ENCODE measurements at regions of chr12 and their contacts with region 1.

Region 1: DNA sequence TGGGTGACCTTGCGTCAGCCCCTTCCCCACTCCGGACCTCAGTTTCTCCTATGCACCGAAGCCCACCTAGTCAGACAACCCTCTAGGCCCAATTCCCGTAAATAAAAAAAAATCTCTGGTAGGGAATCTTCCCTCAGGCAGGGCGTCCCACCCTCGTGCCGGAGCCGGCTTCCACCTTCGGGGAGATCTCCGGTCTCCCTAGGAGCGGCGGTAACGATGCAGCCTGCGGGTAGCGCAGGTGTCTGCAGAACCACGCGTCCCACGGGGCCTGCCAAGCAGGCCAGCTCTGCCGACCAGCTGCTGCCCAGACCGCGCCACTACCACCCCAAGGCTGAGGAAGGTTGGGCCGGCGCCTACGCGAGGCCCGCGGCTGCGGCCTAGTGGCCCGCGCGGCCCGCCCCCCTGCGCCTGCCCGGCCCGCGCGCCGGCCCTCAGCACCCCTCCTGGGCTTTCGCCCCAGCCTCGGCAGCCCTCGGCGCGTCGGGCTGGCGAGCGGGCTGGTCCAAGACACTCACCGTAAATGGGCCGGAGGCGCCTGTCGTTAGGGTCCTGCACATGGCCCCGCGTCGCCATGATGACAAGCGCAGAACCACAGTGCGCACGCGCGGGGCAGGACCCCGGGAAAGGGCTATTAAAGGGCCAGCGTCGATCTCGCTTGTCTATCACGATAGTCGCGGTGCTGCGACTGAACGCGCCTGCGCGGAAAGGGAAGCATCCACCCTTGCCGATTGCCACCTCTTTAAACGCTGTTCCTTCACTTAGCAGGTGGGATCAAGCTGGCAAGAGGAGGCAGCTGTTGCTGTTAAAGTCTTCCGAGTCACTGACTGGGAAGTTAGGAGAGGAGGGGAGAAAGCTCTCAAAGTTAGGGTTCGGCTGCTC is at the start of gene NAA25:
- DNase-seq: peak; percentile 89
- H3K4me3 ChIP-seq: peak within 1 kb of the TSS; percentile 90
- H3K27ac ChIP-seq: peak within 1 kb of the TSS; percentile 85
- H3K4me1 ChIP-seq: peaks cover 43% of the 10 kb centered on the region
- CTCF ChIP-seq: no peak
- total RNA-seq, gene NAA25: 21.6 and 27.4 TPM in 2 replicates

Region 2: GRCh38 chr12:112096667-112097066 is 11.8 kb before region 1 on chr12:
- CTCF ChIA-PET with region 1: no interaction called
- POLR2A ChIA-PET with region 1: interaction called, 19 read pairs
- intact Hi-C with region 1: no loop called
- DNase-seq: no peak
- H3K4me3 ChIP-seq: no peak overlapping the region
- H3K27ac ChIP-seq: no peak overlapping the region
- H3K4me1 ChIP-seq: no peaks in the 10 kb centered on the region
- CTCF ChIP-seq: no peak

Region 3: DNA sequence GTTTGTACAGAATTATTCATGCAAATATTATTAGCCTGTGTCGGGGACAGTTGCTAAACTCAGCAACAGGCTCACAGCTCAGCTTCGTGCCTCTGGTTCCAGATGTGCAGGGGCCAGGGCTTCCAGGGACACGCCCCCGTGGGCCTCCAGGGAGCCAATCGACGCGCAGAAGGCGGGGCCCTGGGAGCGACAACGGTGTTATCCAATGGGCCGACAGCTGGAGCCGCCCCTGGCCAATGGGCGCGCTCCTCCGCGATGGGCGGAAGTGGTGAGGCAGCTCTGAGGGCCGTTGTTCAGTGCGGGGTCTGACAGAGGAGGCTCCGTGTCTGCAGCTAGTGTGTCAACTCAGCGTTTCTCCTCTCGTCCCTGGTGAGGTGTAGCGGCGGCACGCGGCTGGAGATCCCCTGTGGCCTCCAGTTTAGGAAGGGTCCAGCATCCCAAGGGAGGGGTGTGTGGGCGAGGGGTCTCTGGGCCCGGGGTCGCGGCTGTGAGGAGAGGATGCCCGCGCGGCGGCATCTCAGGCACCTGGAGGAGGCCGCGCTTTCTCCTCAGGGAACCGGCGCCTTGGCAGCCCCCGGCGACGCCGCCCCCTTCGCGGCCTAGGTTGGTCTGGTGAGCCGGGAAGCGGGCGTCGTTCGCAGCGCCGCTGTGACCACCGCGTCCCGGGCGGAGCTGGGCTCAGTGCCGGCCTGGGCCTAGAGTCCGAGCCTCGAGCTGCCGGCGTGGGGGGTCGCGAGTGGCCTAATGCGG is 17.0 kb after region 1 on chr12 and contains the start of gene TRAFD1:
- CTCF ChIA-PET with region 1: interaction called, 3 read pairs
- POLR2A ChIA-PET with region 1: interaction called, 36 read pairs
- intact Hi-C with region 1: no loop called
- DNase-seq: peak; percentile 98
- H3K4me3 ChIP-seq: peak within 1 kb of the TSS; percentile 79
- H3K27ac ChIP-seq: peak within 1 kb of the TSS; percentile 26
- H3K4me1 ChIP-seq: peaks cover 25% of the 10 kb centered on the region
- CTCF ChIP-seq: no peak
- total RNA-seq, gene TRAFD1: 14.3 and 21.0 TPM in 2 replicates